ENCODE measurements at regions of chr12 and their contacts with region 1.

Region 1: GRCh38 chr12:86389949-86390348 is 133.8 kb upstream of the MGAT4C start:
- DNase-seq: no peak
- ATAC-seq: no peak
- H3K4me3 ChIP-seq: no peak overlapping the region
- H3K4me3 Mint-ChIP-seq: no peak overlapping the region
- H3K27ac ChIP-seq: no peak overlapping the region
- H3K27ac Mint-ChIP-seq: no peak overlapping the region
- H3K4me1 ChIP-seq: no peaks in the 10 kb centered on the region
- H3K4me1 Mint-ChIP-seq: no peaks in the 10 kb centered on the region
- H3K27me3 ChIP-seq: no peaks in the 10 kb centered on the region
- H3K27me3 Mint-ChIP-seq: no peaks in the 10 kb centered on the region
- CTCF ChIP-seq: no peak

Region 2: GRCh38 chr12:86179855-86180254 is 210.1 kb before region 1 on chr12:
- CTCF ChIA-PET with region 1: no interaction called
- POLR2A ChIA-PET with region 1: no interaction called
- intact Hi-C with region 1: no loop called
- DNase-seq: no peak
- ATAC-seq: no peak
- H3K4me3 ChIP-seq: no peak overlapping the region
- H3K4me3 Mint-ChIP-seq: no peak overlapping the region
- H3K27ac ChIP-seq: no peak overlapping the region
- H3K27ac Mint-ChIP-seq: no peak overlapping the region
- H3K4me1 ChIP-seq: no peaks in the 10 kb centered on the region
- H3K4me1 Mint-ChIP-seq: no peaks in the 10 kb centered on the region
- H3K27me3 ChIP-seq: no peaks in the 10 kb centered on the region
- H3K27me3 Mint-ChIP-seq: no peaks in the 10 kb centered on the region
- CTCF ChIP-seq: no peak

Region 3: DNA sequence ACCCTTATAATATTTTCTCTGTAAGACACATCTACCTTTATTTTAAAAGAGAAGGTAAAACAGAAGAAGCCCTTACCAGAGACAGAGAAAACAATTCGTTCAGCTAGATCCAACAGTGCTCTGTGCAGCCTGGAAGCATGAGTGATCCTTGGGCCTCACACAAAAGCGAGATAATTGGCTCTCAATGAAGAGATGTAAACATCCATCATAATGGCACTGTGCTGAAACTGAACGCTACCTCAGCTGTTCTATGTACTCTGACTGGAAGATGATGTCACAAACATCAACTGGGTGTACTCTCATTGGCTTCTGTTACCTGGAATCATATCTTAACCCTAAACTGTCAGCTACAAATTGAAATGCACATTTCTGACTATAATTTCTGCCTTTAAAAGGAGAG is 133.8 kb before region 1 on chr12 and contains the start of gene MGAT4C:
- CTCF ChIA-PET with region 1: no interaction called
- POLR2A ChIA-PET with region 1: no interaction called
- intact Hi-C with region 1: no loop called
- DNase-seq: no peak
- ATAC-seq: no peak
- H3K4me3 ChIP-seq: no peak within 1 kb of the TSS
- H3K4me3 Mint-ChIP-seq: no peak within 1 kb of the TSS
- H3K27ac ChIP-seq: no peak within 1 kb of the TSS
- H3K27ac Mint-ChIP-seq: no peak within 1 kb of the TSS
- H3K4me1 ChIP-seq: no peaks in the 10 kb centered on the region
- H3K4me1 Mint-ChIP-seq: no peaks in the 10 kb centered on the region
- H3K27me3 ChIP-seq: no peaks in the 10 kb centered on the region
- H3K27me3 Mint-ChIP-seq: no peaks in the 10 kb centered on the region
- CTCF ChIP-seq: no peak
- total RNA-seq, gene MGAT4C: not detected

Region 4: DNA sequence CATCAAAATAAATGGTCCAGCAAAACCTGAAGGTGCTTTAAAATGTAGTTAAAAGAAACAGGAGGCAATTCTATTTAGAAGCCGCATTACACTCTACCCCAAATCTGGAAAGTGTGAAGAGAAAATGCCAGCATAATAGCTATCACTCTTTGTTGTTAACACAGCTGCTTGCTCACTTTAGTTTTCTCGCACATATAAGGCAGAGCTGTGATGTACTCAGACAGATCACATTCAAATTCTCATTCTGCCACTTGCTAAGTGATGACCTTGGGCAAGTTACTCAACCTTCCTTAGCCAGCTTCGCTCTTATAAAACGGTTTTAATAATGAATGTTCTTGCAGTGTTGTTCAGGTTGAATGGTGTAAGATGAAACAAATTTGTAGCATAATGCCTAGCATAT is 77.7 kb before region 1 on chr12:
- CTCF ChIA-PET with region 1: no interaction called
- POLR2A ChIA-PET with region 1: no interaction called
- intact Hi-C with region 1: no loop called
- DNase-seq: no peak
- ATAC-seq: no peak
- H3K4me3 ChIP-seq: no peak overlapping the region
- H3K4me3 Mint-ChIP-seq: no peak overlapping the region
- H3K27ac ChIP-seq: no peak overlapping the region
- H3K27ac Mint-ChIP-seq: no peak overlapping the region
- H3K4me1 ChIP-seq: no peaks in the 10 kb centered on the region
- H3K4me1 Mint-ChIP-seq: no peaks in the 10 kb centered on the region
- H3K27me3 ChIP-seq: no peaks in the 10 kb centered on the region
- H3K27me3 Mint-ChIP-seq: no peaks in the 10 kb centered on the region
- CTCF ChIP-seq: no peak

Region 5: DNA sequence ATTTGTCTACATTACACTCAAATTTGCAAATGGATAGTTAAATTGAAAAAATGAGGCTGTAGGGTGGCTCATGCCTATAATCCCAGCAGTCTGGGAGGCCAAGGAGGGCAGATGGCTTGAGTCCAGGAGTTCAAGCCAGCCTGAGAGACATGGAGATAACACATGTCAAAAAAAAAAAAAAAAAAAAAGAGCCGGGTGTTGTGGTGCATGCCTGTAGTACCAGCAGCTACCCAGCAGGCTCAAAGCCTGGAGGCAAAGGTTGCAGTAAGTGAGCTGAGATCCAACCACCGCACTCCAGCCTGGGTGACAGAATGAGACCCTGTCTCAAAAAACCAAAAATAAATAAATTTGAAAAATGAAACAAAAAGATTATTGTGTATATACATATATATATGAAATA is 13.9 kb before region 1 on chr12:
- CTCF ChIA-PET with region 1: no interaction called
- POLR2A ChIA-PET with region 1: no interaction called
- intact Hi-C with region 1: no loop called
- DNase-seq: no peak
- ATAC-seq: no peak
- H3K4me3 ChIP-seq: no peak overlapping the region
- H3K4me3 Mint-ChIP-seq: no peak overlapping the region
- H3K27ac ChIP-seq: no peak overlapping the region
- H3K27ac Mint-ChIP-seq: no peak overlapping the region
- H3K4me1 ChIP-seq: no peaks in the 10 kb centered on the region
- H3K4me1 Mint-ChIP-seq: no peaks in the 10 kb centered on the region
- H3K27me3 ChIP-seq: no peaks in the 10 kb centered on the region
- H3K27me3 Mint-ChIP-seq: no peaks in the 10 kb centered on the region
- CTCF ChIP-seq: no peak

Region 6: GRCh38 chr12:86407620-86408208 is 17.8 kb after region 1 on chr12:
- CTCF ChIA-PET with region 1: interaction called, 3 read pairs
- POLR2A ChIA-PET with region 1: no interaction called
- intact Hi-C with region 1: loop called in 1 of 2 experiments (anchors 2 kb)
- DNase-seq: no peak
- ATAC-seq: no peak
- H3K4me3 ChIP-seq: no peak overlapping the region
- H3K4me3 Mint-ChIP-seq: no peak overlapping the region
- H3K27ac ChIP-seq: no peak overlapping the region
- H3K27ac Mint-ChIP-seq: no peak overlapping the region
- H3K4me1 ChIP-seq: no peaks in the 10 kb centered on the region
- H3K4me1 Mint-ChIP-seq: no peaks in the 10 kb centered on the region
- H3K27me3 ChIP-seq: no peaks in the 10 kb centered on the region
- H3K27me3 Mint-ChIP-seq: no peaks in the 10 kb centered on the region
- CTCF ChIP-seq: no peak

Measured in CD4-positive, alpha-beta T cell (primary cell).